ENCODE measurements at regions of chrX and their contacts with region 1.

Region 1: DNA sequence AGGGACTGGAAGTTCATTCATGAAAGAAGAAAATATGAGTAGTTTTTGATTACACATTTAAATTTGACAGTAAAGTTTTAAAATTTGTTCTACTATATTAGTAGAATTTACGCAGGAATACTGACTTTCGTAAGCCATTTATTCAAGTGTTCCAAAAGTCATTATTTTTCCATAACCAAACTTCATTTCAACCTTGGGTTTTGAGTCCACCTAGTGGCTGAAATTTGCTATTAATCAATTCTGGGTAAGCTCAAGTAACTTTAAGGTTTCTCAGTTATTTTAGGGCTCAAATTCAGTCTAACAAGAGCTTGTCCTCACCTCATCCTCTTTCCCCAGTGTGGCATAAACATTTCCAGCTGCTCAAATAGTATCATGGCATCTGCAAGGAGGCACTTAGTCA is 175.4 kb downstream of the SH3BGRL start:
- DNase-seq: peak; percentile 37
- H3K4me3 ChIP-seq: no peak overlapping the region
- H3K27ac ChIP-seq: no peak overlapping the region
- H3K4me1 ChIP-seq: no peaks in the 10 kb centered on the region
- H3K27me3 ChIP-seq: no peaks in the 10 kb centered on the region

Region 2: GRCh38 chrX:80876877-80877276 is 500.5 kb before region 1 on chrX:
- in situ Hi-C with region 1: loop called (anchors 25 kb)
- DNase-seq: peak; percentile 38
- H3K4me3 ChIP-seq: no peak overlapping the region
- H3K27ac ChIP-seq: no peak overlapping the region
- H3K4me1 ChIP-seq: peaks cover 15% of the 10 kb centered on the region; the same call in 1 of the 2 replicates
- H3K27me3 ChIP-seq: no peaks in the 10 kb centered on the region

Region 3: DNA sequence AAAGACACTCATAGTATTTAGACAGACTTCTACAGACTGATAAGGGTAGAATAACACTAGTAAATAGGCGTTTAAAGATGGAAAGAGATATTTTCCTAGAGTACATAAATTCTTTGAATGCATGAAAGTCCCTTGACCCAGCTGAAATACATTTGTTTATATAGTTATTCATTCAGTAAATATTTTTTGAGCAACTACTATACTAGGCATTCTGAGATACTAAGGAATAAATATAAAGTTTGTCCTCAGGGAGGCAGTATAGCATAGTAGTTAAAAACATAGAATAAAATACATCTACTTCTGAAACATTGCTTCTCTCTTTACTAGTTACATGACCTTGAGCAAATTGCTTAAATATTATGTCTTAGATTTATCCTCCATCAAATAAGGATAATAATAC is 203.0 kb before region 1 on chrX:
- in situ Hi-C with region 1: loop called (anchors 25 kb)
- DNase-seq: peak; percentile 45
- H3K4me3 ChIP-seq: no peak overlapping the region
- H3K27ac ChIP-seq: no peak overlapping the region
- H3K4me1 ChIP-seq: no peaks in the 10 kb centered on the region
- H3K27me3 ChIP-seq: no peaks in the 10 kb centered on the region

Region 4: DNA sequence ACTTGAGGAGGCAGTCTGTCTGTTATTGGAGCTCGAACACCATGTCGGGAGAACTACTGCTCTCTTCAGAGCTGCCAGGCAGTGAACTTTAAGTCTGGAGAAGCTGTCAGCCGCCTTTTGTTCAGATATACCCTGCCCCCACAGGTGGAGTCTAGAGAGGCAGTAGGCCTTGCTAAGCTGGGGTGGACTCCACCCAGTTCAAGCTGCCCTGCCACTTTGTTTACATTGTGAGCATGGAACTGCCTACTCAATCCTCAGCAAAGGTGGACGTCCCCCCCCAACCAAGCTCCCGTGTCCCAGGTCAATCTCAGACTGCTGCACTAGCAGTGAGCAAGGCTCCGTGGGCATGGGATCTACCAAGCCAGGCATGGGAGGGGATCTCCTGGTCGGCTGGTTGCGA is 106.6 kb before region 1 on chrX:
- in situ Hi-C with region 1: no loop called
- DNase-seq: no peak
- H3K4me3 ChIP-seq: no peak overlapping the region
- H3K27ac ChIP-seq: no peak overlapping the region
- H3K4me1 ChIP-seq: no peaks in the 10 kb centered on the region
- H3K27me3 ChIP-seq: no peaks in the 10 kb centered on the region

Region 5: DNA sequence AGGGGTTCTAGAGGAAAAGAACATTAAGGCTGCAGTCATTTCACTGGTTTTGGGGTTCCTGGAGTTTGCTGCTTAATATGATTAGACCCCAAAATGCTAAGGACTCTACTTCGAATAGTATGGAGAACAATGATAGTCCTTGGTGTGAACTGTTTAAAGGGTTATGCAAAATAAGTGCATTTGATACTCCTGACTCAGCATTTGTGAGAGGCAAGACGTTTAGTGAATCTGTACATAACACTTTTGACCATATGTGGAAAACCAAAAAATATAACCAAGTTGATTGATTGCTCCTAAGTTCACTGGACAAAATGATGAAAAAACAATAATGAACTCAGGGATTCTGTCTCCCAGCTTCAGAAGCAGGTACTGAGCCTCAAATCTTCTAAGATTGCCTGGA is 238.7 kb after region 1 on chrX:
- in situ Hi-C with region 1: no loop called
- DNase-seq: no peak
- H3K4me3 ChIP-seq: no peak overlapping the region
- H3K27ac ChIP-seq: no peak overlapping the region
- H3K4me1 ChIP-seq: no peaks in the 10 kb centered on the region
- H3K27me3 ChIP-seq: no peaks in the 10 kb centered on the region

Region 6: DNA sequence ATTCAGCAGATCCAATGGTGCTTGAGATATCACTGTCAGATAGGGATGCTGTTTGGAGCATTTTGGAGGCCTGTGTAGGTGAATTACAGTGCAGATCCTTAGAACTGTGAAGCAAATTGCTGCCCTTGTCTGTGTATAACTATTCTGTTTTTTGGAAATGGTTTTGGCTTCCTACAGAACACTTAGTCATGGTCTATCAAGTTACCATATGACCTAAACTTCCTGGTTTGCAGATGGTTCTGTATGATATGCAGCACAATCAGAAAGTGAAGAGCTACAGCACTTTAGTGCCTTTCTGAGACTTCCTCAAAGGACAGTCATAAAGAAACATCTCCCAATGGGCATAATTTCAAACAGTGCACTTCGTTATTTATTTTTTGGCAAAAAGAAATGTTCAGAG is 513.2 kb after region 1 on chrX:
- in situ Hi-C with region 1: no loop called
- DNase-seq: no peak
- H3K4me3 ChIP-seq: no peak overlapping the region
- H3K27ac ChIP-seq: no peak overlapping the region
- H3K4me1 ChIP-seq: no peaks in the 10 kb centered on the region
- H3K27me3 ChIP-seq: no peaks in the 10 kb centered on the region

Measured in GM23248 (cell line).